ENCODE measurements at regions of chr15 and their contacts with region 1.

Region 1: DNA sequence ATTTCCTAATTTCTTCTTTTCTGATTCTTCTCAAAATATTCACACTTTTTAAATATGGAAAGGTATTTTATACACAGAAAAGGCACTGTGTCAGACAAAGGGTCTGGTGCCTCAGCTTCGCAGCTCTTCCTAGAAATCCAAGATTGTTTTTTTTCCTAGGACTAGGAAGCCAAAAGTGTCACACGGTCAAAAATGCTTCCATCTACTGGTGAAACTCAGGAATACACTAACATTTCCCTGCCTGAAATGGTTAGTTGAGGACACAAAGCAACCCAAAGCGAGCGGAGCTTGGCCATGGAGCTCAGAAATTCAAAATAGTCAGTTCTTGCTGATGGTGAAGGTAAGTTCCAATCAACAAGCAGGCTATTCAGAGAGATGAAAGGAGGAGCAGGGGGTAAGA is 426.5 kb upstream of the RASGRP1 start:
- DNase-seq: peak; percentile 24
- H3K4me3 ChIP-seq: no peak overlapping the region
- H3K27ac ChIP-seq: no peak overlapping the region
- H3K4me1 ChIP-seq: peaks cover 15% of the 10 kb centered on the region
- H3K27me3 ChIP-seq: no peaks in the 10 kb centered on the region
- CTCF ChIP-seq: peak; percentile 52 to 64

Region 2: GRCh38 chr15:38707802-38708671 is 283.1 kb before region 1 on chr15:
- CTCF ChIA-PET with region 1: no interaction called
- dilution Hi-C with region 1: no loop called
- in situ Hi-C with region 1: no loop called
- intact Hi-C with region 1: loop called (anchors 1 kb)
- DNase-seq: peak; percentile 52
- H3K4me3 ChIP-seq: no peak overlapping the region
- H3K27ac ChIP-seq: no peak overlapping the region
- H3K4me1 ChIP-seq: no peaks in the 10 kb centered on the region
- H3K27me3 ChIP-seq: no peaks in the 10 kb centered on the region
- CTCF ChIP-seq: peak; percentile 74 to 78

Region 3: DNA sequence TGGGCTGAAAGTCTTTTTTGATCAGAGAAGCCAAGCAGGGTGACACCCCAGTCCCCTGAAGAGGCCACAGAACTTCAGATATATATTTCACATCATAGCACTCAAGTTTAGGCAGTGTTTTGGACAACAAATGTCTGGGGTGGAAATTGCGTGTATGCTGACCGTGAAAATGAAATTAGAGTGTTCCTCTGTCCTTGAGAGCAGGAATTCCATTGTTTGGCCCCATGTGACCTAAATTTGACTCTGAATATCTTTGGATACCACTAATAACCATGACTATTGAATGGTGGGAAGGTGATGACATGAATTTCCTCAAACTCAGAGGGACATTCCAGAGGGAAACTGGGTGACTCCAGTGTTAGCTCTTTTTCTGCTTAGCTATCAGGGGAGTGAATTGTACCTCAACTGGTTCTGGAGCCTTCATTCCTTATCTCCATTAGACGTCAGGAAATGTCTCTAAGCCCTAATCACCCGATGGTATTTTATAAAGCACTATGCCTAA is 163.0 kb before region 1 on chr15:
- CTCF ChIA-PET with region 1: no interaction called
- dilution Hi-C with region 1: no loop called
- in situ Hi-C with region 1: loop called in 1 of 2 experiments (anchors 10 kb)
- intact Hi-C with region 1: no loop called
- DNase-seq: no peak
- H3K4me3 ChIP-seq: no peak overlapping the region
- H3K27ac ChIP-seq: no peak overlapping the region
- H3K4me1 ChIP-seq: no peaks in the 10 kb centered on the region
- H3K27me3 ChIP-seq: peaks cover 2% of the 10 kb centered on the region
- CTCF ChIP-seq: no peak

Region 4: GRCh38 chr15:38954090-38954489 is 37.0 kb before region 1 on chr15:
- CTCF ChIA-PET with region 1: no interaction called
- dilution Hi-C with region 1: no loop called
- in situ Hi-C with region 1: no loop called
- intact Hi-C with region 1: no loop called
- DNase-seq: no peak
- H3K4me3 ChIP-seq: no peak overlapping the region
- H3K27ac ChIP-seq: no peak overlapping the region
- H3K4me1 ChIP-seq: no peaks in the 10 kb centered on the region
- H3K27me3 ChIP-seq: no peaks in the 10 kb centered on the region
- CTCF ChIP-seq: no peak

Measured in mammary epithelial cell (primary cell).